Heart left ventricle (tissue), 16 donors: ENCODE measurements at regions of chr12 and their contacts with region 1.

Region 1: GRCh38 chr12:50055831-50056638 is 1.4 kb upstream of the ASIC1 start:
- DNase-seq: peak in 2 of 5 donors; percentile 45 to 64
- ATAC-seq: peak; percentile 55 to 71 (median 58)
- H3K4me3 ChIP-seq: no peak overlapping the region
- H3K27ac ChIP-seq: no peak overlapping the region
- H3K4me1 ChIP-seq: peaks cover 0 to 31% (median 16%) of the 10 kb centered on the region in 12 donors
- H3K27me3 ChIP-seq: peaks cover 0 to 27% (median 0%) of the 10 kb centered on the region in 9 donors
- CTCF ChIP-seq: peak; percentile 76 to 96 (median 95)
- POLR2A ChIP-seq: no peak

Region 2: GRCh38 chr12:49776413-49776812 is 279.6 kb before region 1 on chr12:
- intact Hi-C with region 1: loop called in 5 of 10 experiments (anchors 5 to 10 kb)
- DNase-seq: peak; percentile 52 to 79 (median 71)
- ATAC-seq: peak; percentile 61 to 94 (median 89)
- H3K4me3 ChIP-seq: no peak overlapping the region
- H3K27ac ChIP-seq: no peak overlapping the region
- H3K4me1 ChIP-seq: peaks cover 0 to 7% (median 0%) of the 10 kb centered on the region in 12 donors
- H3K27me3 ChIP-seq: no peaks in the 10 kb centered on the region
- CTCF ChIP-seq: peak; percentile 63 to 85 (median 80)
- POLR2A ChIP-seq: no peak

Region 3: DNA sequence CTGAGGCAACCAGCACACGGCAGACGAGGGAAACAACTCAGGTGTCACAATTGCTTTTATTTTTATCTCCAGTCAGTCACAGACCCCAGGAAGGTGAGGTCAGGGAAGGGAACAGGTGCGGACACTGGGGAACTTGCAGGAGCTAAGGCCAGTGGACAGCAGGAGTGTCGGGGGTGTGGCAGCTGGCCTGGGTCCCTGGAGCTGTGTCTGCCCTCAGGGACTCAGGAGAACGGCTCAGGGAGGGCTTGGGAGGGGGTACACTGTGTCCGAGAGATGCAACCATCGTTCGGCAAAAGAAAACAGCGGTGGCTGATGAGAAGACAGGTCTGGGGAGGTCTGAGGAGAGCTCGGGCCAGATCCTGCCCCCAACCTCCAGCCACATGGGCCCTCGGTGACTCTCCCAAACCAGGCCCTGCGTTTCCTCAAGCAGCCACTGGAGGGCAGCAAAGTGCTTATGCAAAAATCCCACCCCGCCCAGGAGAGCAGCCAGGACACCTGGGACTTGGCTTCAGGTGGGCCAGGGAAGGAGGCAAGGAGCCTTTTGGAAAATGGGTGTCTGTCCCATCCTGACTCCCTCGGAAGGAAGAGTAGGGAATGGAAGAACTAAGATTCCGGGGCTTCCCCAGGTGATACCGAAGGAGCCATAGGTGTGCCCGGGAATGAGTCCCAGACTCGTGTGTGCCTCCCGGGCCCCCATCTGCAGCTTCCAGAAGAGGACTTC is 189.0 kb before region 1 on chr12:
- intact Hi-C with region 1: loop called in 9 of 10 experiments (anchors 5 to 10 kb)
- DNase-seq: peak; percentile 67 to 79 (median 73)
- ATAC-seq: peak in 2 of 4 donors; percentile 17
- H3K4me3 ChIP-seq: no peak overlapping the region
- H3K27ac ChIP-seq: no peak overlapping the region
- H3K4me1 ChIP-seq: peaks cover 4 to 37% (median 29%) of the 10 kb centered on the region in 12 donors
- H3K27me3 ChIP-seq: peaks cover 0 to 6% (median 0%) of the 10 kb centered on the region in 9 donors
- CTCF ChIP-seq: peak; percentile 94 to 99 (median 98)
- POLR2A ChIP-seq: no peak

Region 4: DNA sequence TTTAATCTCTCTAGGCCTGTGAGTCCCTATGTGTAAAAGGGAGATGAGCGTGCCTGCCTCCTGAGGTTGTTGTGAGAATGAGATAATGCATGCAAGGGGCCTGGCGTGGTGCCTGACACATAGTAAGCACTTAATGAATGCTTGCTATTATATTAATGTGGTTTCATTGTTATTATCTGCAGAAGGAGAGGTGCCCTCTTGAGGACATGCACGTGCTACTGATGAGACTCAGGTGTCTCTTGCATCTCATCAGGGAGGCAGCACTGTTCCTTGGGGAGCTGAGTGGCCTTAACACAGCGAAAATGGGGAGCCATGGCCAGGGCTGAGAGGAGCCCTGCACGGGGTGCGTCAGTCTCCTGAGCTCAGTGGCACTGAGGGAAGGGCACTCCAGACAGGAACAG is 183.3 kb before region 1 on chr12:
- intact Hi-C with region 1: loop called in 9 of 10 experiments (anchors 5 to 10 kb)
- DNase-seq: peak in 1 of 5 donors; percentile 49
- ATAC-seq: no peak
- H3K4me3 ChIP-seq: no peak overlapping the region
- H3K27ac ChIP-seq: no peak overlapping the region
- H3K4me1 ChIP-seq: peaks cover 4 to 37% (median 23%) of the 10 kb centered on the region in 12 donors
- H3K27me3 ChIP-seq: no peaks in the 10 kb centered on the region
- CTCF ChIP-seq: no peak
- POLR2A ChIP-seq: no peak

Region 5: DNA sequence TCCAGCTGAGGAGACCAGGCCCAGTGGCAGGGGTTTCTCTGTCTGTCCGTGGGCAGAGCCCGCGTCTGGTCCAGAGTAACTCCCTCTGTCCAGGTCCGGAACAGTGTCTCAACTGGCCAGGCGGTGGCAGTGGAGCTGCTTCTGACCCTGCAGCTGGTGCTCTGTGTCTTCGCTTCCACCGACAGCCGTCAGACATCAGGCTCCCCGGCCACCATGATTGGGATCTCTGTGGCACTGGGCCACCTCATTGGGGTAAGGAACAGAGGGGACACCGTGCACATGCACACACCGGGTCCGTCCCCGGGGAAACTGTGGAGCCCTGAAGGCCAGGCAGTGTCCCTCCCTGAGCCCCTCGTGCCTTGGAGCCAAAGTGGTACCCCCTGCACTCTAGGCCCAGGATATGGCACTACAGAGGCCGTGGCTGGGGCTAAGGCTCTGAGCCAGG is 81.8 kb before region 1 on chr12:
- intact Hi-C with region 1: loop called in 6 of 10 experiments (anchors 2 to 5 kb)
- DNase-seq: peak; percentile 70 to 81 (median 79)
- ATAC-seq: peak; percentile 81 to 93 (median 88)
- H3K4me3 ChIP-seq: no peak overlapping the region
- H3K27ac ChIP-seq: peak overlapping the region in 1 of 12 donors; percentile 75
- H3K4me1 ChIP-seq: peaks cover 0 to 23% (median 7%) of the 10 kb centered on the region in 12 donors
- H3K27me3 ChIP-seq: peaks cover 0 to 20% (median under 1%) of the 10 kb centered on the region in 9 donors
- CTCF ChIP-seq: peak; percentile 37 to 69 (median 52)
- POLR2A ChIP-seq: no peak

Region 6: GRCh38 chr12:50117057-50117622 is 61.1 kb after region 1 on chr12:
- intact Hi-C with region 1: no loop called
- DNase-seq: peak in 2 of 5 donors; percentile 50 to 63
- ATAC-seq: peak; percentile 47 to 77 (median 72)
- H3K4me3 ChIP-seq: no peak overlapping the region
- H3K27ac ChIP-seq: peak overlapping the region in 8 of 12 donors; percentile 8 to 62 (median 36)
- H3K4me1 ChIP-seq: peaks cover 0 to 52% (median 30%) of the 10 kb centered on the region in 12 donors
- H3K27me3 ChIP-seq: no peaks in the 10 kb centered on the region
- CTCF ChIP-seq: no peak
- POLR2A ChIP-seq: no peak

Region 7: DNA sequence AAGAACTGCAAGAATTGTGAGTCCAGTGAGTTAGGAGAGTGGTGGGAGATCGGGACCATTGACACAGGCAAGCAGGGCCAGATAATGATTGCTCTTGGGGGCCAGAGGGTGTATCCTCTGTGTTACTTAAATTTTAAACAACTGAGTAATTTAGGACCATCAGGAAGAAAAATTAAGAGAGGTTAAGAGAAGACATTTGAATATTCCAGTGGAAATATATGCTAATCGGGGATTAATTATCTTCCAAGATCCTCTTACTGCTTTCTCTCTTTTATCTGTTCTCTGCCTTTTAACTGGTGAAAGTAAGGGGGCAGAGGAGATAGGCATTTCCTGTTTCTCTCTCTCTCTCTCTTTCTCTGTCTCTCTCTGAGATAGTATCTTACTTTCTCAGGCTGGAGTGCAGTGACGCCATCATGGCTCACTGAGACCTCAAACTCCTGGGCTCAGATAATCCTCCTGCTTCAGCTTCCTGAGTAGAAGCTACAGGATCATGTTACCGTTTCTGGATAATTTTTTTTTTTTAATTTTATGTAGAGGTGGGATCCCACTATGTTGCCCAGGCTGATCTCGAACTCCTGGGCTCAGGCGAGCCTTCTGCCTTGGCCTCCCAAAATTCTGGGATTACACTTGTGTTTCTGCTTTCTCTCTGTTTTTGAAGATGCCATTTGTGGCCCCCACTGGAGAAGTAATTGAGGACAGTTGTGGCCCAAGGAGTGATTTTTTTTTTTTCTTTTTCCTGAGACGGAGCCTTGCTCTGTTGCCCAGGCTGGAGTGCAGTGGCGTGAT is 533.8 kb after region 1 on chr12:
- intact Hi-C with region 1: no loop called
- DNase-seq: no peak
- ATAC-seq: no peak
- H3K4me3 ChIP-seq: no peak overlapping the region
- H3K27ac ChIP-seq: no peak overlapping the region
- H3K4me1 ChIP-seq: peaks cover 0 to 8% (median 0%) of the 10 kb centered on the region in 12 donors
- H3K27me3 ChIP-seq: no peaks in the 10 kb centered on the region
- CTCF ChIP-seq: no peak
- POLR2A ChIP-seq: no peak